MCF 10A (cell line): ENCODE measurements at regions of chr9 and their contacts with region 1.

Region 1: DNA sequence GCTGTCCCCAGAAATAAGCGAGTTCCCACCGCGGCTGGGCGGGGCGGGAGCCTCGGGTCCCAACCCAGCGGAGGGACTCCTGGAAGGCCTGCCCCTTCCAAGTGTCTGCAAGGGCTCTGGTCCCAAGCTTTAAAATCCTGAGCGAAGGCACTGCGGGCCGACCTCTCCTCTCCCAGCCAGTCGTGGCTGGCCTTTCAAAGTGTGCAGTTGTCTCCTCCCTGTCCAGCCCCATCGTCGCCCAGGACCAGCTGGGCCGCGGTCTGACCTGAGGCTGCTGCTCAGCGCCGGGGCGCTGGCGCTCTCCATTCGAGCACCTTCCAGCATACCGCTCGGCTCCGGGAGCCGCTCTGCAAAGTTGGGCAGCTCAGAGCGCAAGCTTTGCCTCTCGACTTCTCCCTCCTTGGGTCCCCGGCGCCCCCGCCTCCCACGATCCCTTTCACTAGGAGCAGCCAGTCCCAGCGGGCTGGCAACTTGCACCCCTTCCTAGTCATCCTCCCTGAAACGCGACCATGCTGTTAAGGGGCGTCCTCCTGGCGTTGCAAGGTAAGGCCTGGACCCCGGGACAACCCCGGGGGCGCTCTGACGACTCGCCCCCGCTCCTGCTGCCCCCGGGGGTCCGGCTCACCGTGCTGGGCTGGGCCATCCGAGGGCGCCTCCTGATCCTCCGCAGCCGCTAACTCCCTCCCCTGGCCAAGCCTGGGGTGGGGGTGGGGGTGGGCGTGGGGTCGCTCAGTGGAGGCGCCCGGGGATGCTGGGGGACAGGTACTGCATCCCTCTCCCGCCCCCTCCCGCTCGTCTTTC is at the start of gene MAMDC2:
- DNase-seq: no peak
- H3K4me3 Mint-ChIP-seq: peak within 1 kb of the TSS; percentile 68
- H3K27ac Mint-ChIP-seq: peak within 1 kb of the TSS; percentile 6
- H3K4me1 Mint-ChIP-seq: peaks cover 47% of the 10 kb centered on the region
- H3K27me3 Mint-ChIP-seq: no peaks in the 10 kb centered on the region
- CTCF ChIP-seq: no peak
- total RNA-seq, gene MAMDC2: not detected in 2 replicates

Region 2: DNA sequence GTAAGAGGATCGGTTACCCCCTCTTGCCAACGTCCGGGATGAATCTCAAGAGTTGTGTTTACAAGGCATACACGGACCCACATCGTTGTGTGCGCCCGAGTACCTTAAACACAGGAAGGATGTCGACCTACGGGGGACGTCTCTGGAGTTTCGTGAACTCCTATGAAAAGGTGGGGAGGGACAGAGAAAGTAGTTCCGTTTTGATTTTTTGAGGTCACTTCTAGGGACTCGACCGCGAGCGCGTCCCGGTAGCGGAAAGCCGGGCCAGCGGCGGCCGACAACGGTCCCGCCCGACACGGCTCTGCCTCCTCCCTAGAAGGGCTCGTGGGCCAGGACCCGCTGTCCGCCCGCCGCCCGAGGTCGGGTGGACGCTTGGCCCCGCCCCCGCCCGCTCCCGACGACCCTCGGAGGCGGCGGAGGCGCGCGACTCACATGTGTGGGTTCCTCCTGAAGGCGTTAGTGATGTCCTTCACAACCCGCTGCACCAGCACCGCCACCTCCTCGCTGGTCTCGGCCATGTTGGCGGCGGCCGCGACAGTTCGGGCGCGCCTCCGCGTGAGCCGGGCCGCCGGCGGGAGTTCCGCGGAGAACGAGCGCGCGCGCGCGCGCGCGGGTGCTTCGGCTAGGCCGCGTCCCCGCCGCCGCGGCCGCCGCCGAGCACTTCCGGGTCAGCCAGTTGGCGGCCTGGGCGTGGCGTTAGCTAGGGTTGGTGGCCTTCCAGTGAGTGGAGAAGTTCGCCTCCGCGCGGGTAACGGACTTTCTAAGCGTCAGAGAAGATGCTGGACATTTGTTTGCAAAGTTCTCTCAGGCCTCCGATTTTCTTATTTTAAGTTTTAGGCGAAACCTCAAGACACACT is 284.2 kb before region 1 on chr9 and contains the start of gene PTAR1:
- CTCF ChIA-PET with region 1: no interaction called
- POLR2A ChIA-PET with region 1: no interaction called
- intact Hi-C with region 1: no loop called
- DNase-seq: peak; percentile 89
- H3K4me3 Mint-ChIP-seq: peak within 1 kb of the TSS; percentile 89
- H3K27ac Mint-ChIP-seq: peak within 1 kb of the TSS; percentile 73
- H3K4me1 Mint-ChIP-seq: peaks cover 6% of the 10 kb centered on the region
- H3K27me3 Mint-ChIP-seq: no peaks in the 10 kb centered on the region
- CTCF ChIP-seq: no peak
- total RNA-seq, gene PTAR1: 41.4 and 43.5 TPM in 2 replicates

Region 3: GRCh38 chr9:69932901-69933300 is 111.0 kb before region 1 on chr9:
- CTCF ChIA-PET with region 1: no interaction called
- POLR2A ChIA-PET with region 1: no interaction called
- intact Hi-C with region 1: no loop called
- DNase-seq: peak; percentile 62
- H3K4me3 Mint-ChIP-seq: no peak overlapping the region
- H3K27ac Mint-ChIP-seq: no peak overlapping the region
- H3K4me1 Mint-ChIP-seq: peaks cover 8% of the 10 kb centered on the region
- H3K27me3 Mint-ChIP-seq: peaks cover 1% of the 10 kb centered on the region
- CTCF ChIP-seq: peak; percentile 31

Region 4: DNA sequence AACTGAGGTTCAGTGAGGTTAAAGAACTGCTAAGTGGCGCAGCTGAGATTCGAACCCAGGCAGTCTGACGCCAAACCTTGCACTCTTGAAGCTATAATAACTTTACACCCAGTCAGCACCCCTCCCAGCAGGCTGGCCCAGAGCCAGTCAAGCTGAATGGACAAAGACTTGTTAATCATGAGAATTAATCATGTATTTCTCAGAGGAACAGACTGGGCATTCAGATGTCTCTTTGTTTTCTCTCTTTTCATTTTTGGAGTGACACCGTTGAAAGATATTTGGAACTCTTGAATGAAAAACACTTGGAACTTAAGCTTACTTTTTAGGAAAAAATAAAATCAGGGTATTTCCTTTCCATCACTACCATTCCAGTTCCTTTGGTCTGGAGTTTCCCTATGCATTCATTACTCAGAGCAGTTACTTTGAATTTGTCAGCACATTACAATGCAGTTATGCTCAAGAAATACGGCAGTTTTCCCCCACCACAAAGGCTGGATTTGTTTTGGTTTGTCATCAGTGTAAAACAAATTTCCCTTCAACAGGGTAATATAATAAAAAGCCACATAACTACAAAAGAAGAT is 22.8 kb before region 1 on chr9:
- CTCF ChIA-PET with region 1: no interaction called
- POLR2A ChIA-PET with region 1: interaction called, 6 read pairs
- intact Hi-C with region 1: loop called (anchors 2 kb)
- DNase-seq: peak; percentile 74
- H3K4me3 Mint-ChIP-seq: no peak overlapping the region
- H3K27ac Mint-ChIP-seq: peak overlapping the region; percentile 61
- H3K4me1 Mint-ChIP-seq: peaks cover 13% of the 10 kb centered on the region
- H3K27me3 Mint-ChIP-seq: no peaks in the 10 kb centered on the region
- CTCF ChIP-seq: no peak

Region 5: DNA sequence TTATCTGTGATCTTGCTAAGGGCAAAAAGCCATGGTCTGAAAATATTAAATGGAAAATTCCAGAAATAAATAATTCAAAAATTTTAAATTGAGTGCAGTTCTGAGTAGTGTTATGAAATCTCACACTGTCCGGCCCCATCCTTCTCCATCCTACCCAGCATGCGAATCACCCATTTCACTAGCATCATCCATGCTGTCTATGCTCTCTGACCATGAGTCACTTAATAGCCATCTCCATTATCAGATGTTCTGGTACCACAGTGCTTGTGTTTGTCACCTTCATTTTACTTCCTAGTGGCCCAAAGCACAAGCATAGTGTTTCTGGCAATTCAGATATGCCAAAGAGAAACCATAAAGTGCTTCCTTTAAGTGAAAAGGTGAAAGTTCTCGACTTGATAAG is 151.6 kb after region 1 on chr9:
- CTCF ChIA-PET with region 1: no interaction called
- POLR2A ChIA-PET with region 1: no interaction called
- intact Hi-C with region 1: no loop called
- DNase-seq: no peak
- H3K4me3 Mint-ChIP-seq: no peak overlapping the region
- H3K27ac Mint-ChIP-seq: no peak overlapping the region
- H3K4me1 Mint-ChIP-seq: no peaks in the 10 kb centered on the region
- H3K27me3 Mint-ChIP-seq: no peaks in the 10 kb centered on the region
- CTCF ChIP-seq: no peak

Region 6: GRCh38 chr9:70250221-70250620 is 206.3 kb after region 1 on chr9:
- CTCF ChIA-PET with region 1: no interaction called
- POLR2A ChIA-PET with region 1: no interaction called
- intact Hi-C with region 1: no loop called
- DNase-seq: no peak
- H3K4me3 Mint-ChIP-seq: no peak overlapping the region
- H3K27ac Mint-ChIP-seq: no peak overlapping the region
- H3K4me1 Mint-ChIP-seq: peaks cover under 1% of the 10 kb centered on the region
- H3K27me3 Mint-ChIP-seq: no peaks in the 10 kb centered on the region
- CTCF ChIP-seq: no peak